ENCODE measurements at regions of chr22 and their contacts with region 1.

Region 1: DNA sequence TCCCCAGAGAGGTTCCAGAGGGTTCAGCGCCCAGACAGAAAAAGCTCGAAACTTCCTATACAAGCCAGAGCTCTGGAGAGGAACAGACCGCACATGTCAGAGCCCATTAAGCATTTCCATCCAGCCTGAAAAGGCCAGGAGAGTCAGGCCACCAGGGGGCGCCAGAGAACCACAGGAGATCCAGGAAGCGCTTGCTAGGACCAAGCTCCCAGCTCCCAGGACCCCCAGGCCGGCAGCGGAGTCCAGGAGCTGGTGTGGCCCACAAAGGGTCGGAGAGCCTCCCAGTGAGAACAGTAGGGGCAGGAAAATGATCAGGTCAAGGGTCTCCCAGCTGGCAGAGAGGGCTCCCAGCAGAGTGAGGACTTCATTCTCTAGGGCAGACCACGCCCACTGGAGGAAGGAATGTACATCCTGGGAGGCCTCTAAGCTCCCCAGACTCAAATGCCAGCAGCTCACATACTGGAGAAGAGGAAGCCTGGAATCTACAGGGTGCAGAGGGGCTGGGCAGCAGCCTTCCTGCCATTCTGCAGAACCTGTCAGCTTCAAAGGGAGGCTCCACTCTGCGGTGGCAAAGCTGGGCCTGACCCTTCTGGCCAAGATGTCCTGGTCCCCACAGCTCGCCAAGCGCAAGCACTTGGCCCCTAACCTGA is 2.1 kb upstream of the MEI1 start:
- DNase-seq: peak; percentile 97
- ATAC-seq: peak; percentile 80
- H3K4me3 Mint-ChIP-seq: no peak overlapping the region
- H3K27ac Mint-ChIP-seq: peak overlapping the region; percentile 47
- H3K4me1 Mint-ChIP-seq: peaks cover 10% of the 10 kb centered on the region
- H3K27me3 Mint-ChIP-seq: no peaks in the 10 kb centered on the region
- CTCF ChIP-seq: peak; percentile 98

Region 2: DNA sequence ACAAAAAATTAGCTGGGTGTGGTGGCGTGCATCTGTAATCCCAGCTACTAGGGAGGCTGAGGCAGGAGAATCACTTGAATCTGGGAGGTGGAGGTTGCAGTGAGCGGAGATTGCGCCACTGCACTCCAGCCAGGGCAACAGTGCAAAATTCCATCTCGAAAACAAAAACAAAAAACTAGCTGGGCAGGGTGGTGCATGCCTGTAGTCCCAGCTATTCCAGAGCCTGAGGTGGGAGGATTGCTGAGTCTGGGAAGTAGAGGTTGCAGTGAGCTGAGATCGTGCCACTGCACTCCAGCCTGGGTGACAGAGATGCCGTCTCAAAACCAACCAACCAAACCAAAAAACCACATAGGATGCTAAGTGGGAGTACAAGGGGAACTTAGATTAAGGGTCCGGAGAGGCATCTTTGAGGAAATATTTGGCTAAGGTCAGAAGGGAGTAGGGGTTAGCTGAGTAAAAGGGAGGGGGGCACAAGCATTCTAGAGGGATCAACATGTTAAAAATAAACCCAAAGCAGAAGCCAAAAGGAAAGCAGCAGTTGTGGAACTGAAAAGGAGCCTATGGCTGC is 239.0 kb before region 1 on chr22:
- CTCF ChIA-PET with region 1: no interaction called
- POLR2A ChIA-PET with region 1: no interaction called
- intact Hi-C with region 1: no loop called
- DNase-seq: no peak
- ATAC-seq: no peak
- H3K4me3 Mint-ChIP-seq: no peak overlapping the region
- H3K27ac Mint-ChIP-seq: peak overlapping the region; percentile 54
- H3K4me1 Mint-ChIP-seq: peaks cover 6% of the 10 kb centered on the region
- H3K27me3 Mint-ChIP-seq: no peaks in the 10 kb centered on the region
- CTCF ChIP-seq: no peak

Region 3: DNA sequence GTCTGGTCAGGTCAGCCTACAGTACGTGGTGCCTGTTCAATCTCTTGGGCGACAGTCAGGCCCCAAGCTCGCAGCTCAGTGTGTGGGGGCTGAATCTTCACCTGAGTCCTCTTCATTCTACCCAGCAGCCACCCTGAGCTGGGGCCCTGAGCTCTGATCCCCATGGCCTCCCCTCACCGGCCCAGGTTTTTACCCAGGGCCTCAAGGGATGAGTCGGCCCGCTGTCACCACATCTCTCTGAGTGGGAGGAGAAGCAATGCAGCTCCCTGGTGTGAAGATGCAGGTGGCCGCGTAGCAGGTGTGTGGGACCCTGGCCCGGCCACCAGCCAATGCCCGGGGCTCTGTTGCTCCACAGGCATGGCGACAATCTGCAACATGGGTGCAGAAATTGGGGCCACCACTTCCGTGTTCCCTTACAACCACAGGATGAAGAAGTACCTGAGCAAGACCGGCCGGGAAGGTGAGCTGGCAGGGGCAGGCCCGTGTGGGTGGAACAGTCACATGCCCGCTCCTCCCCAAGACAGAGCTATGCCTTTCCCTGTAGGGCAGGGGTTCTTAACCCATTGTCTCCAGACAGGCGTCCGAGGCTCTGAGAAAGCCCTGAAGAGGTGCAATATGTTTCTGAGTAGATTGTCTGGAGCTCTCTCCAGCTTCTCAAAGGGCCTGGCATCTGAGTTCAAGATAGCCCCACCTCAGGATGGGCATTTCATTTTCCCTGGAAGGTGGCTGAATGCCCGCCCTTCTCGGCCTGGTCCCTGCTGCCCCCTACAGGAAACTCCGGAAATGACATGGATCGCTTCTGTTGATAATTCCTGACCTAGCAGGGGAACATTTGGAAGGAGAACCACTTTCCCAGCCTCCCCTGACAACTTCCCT is 179.8 kb before region 1 on chr22:
- CTCF ChIA-PET with region 1: no interaction called
- POLR2A ChIA-PET with region 1: no interaction called
- intact Hi-C with region 1: no loop called
- DNase-seq: peak; percentile 55
- ATAC-seq: peak; percentile 81
- H3K4me3 Mint-ChIP-seq: no peak overlapping the region
- H3K27ac Mint-ChIP-seq: peak overlapping the region; percentile 55
- H3K4me1 Mint-ChIP-seq: peaks cover 7% of the 10 kb centered on the region
- H3K27me3 Mint-ChIP-seq: no peaks in the 10 kb centered on the region
- CTCF ChIP-seq: peak; percentile 71

Region 4: GRCh38 chr22:41576877-41577276 is 120.4 kb before region 1 on chr22:
- CTCF ChIA-PET with region 1: no interaction called
- POLR2A ChIA-PET with region 1: no interaction called
- intact Hi-C with region 1: no loop called
- DNase-seq: peak; percentile 64
- ATAC-seq: peak; percentile 75
- H3K4me3 Mint-ChIP-seq: no peak overlapping the region
- H3K27ac Mint-ChIP-seq: no peak overlapping the region
- H3K4me1 Mint-ChIP-seq: no peaks in the 10 kb centered on the region
- H3K27me3 Mint-ChIP-seq: no peaks in the 10 kb centered on the region
- CTCF ChIP-seq: peak; percentile 61

Region 5: DNA sequence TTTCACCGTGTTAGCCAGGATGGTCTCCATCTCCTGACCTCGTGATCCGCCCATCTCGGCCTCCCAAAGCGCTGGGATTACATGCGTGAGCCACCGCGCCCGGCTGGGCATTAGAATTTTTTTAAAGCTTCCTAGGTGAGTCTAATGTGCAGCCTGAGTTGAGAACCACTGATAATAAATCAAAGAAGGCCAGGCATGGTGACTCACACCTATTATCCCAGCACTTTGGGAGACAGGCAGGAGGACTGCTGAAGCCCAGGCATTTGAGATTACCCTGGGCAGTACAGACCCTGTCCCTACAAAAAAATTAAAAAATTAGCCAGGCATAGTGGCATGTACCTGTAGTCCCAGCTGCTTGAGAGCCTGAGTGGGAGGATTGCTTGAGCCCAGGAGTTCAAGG is 15.8 kb after region 1 on chr22:
- CTCF ChIA-PET with region 1: interaction called, 24 read pairs
- POLR2A ChIA-PET with region 1: no interaction called
- intact Hi-C with region 1: no loop called
- DNase-seq: no peak
- ATAC-seq: no peak
- H3K4me3 Mint-ChIP-seq: no peak overlapping the region
- H3K27ac Mint-ChIP-seq: no peak overlapping the region
- H3K4me1 Mint-ChIP-seq: no peaks in the 10 kb centered on the region
- H3K27me3 Mint-ChIP-seq: no peaks in the 10 kb centered on the region
- CTCF ChIP-seq: no peak

Region 6: DNA sequence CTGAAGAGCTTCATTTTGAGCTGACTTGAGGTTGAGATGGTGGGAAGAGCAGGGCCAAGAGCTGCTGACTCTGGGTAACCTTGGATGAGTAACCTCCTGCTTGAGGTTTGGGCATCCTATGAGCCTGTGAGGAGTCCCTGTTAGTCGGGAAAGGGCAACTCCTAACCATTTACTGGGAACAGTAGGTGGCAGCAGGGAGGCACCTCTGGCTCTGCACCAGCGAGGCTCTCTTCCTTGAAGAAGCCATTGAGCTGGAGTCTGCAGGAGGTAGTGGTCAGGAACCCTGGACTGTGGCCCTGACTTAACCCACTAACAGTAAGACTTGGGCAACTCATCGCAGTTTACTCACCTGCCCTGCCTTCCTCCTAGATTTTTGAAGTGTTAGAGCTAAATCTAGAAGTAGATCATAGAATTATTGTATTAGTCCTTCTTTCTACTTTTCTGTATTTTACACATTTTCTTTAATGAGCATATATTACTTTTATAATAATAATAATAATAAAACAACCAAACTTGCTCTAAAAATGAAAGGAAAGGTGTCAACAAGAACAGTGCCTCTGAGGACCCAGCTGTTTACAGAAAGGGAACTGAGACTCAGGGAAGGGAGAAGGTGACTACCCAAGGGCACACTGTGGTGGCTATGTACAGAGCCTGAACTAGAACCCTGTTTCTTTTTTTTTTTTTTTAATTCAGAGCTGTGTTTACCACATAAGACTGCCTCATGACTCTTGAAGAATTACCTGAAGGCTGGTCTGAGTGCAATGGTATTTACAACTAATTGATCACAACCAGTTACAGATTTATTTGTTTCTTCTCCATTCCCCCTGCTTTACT is 49.5 kb after region 1 on chr22:
- CTCF ChIA-PET with region 1: interaction called, 32 read pairs
- POLR2A ChIA-PET with region 1: no interaction called
- intact Hi-C with region 1: no loop called
- DNase-seq: peak; percentile 63
- ATAC-seq: peak; percentile 89
- H3K4me3 Mint-ChIP-seq: no peak overlapping the region
- H3K27ac Mint-ChIP-seq: no peak overlapping the region
- H3K4me1 Mint-ChIP-seq: peaks cover 6% of the 10 kb centered on the region
- H3K27me3 Mint-ChIP-seq: peaks cover 4% of the 10 kb centered on the region
- CTCF ChIP-seq: peak; percentile 54

Region 7: DNA sequence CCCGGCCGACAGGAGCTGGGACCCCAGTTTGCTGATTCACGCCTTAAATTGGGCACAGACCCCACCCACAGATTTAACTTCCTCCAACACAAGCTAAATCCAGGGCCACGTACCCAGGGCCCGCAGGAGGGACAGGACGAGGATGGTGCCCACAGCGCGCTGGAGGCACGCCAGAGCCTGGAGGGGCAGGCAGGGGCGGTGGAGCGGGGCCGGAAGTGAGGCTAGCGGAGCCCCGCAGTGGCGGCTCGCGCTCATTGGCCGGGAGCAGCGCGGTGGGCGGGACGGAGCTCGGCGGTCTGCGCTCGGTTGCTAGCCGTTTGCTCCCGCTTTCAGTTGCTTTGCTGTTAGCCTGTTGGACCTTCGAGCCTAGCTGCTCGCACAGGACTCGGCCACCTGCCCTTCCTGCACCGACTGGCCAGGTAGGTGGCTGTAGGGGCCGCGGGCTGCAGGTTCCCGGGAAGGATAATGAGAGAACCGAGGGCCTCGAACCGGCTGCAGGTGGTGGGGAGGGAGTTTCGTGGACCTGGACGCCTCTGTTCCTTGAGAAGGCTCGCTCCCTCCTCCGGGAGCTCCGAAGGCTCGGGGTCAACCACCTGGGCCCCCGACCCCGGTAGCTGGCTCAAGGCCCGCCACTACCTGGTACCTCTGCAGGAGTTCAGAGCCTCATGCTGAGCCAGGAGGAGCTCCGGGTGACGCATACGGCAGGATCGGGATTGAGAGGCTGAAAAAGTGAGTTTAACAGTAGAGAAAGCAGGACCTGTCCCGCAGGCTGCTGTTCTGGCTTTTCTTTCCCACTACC is 103.3 kb after region 1 on chr22 and contains the start of gene CCDC134:
- CTCF ChIA-PET with region 1: interaction called, 41 read pairs
- POLR2A ChIA-PET with region 1: interaction called, 3 read pairs
- intact Hi-C with region 1: no loop called
- DNase-seq: peak; percentile 93
- ATAC-seq: peak; percentile 98
- H3K4me3 Mint-ChIP-seq: peak within 1 kb of the TSS; percentile 89
- H3K27ac Mint-ChIP-seq: peak within 1 kb of the TSS; percentile 93
- H3K4me1 Mint-ChIP-seq: peaks cover 30% of the 10 kb centered on the region
- H3K27me3 Mint-ChIP-seq: no peaks in the 10 kb centered on the region
- CTCF ChIP-seq: no peak
- total RNA-seq, gene CCDC134: 15.2 to 15.9 TPM

Region 8: GRCh38 chr22:41888627-41889200 is 191.5 kb after region 1 on chr22:
- CTCF ChIA-PET with region 1: no interaction called
- POLR2A ChIA-PET with region 1: no interaction called
- intact Hi-C with region 1: no loop called
- DNase-seq: no peak
- ATAC-seq: no peak
- H3K4me3 Mint-ChIP-seq: no peak overlapping the region
- H3K27ac Mint-ChIP-seq: no peak overlapping the region
- H3K4me1 Mint-ChIP-seq: no peaks in the 10 kb centered on the region
- H3K27me3 Mint-ChIP-seq: no peaks in the 10 kb centered on the region
- CTCF ChIP-seq: no peak

Region 9: GRCh38 chr22:41925655-41926460 is 228.6 kb after region 1 on chr22:
- CTCF ChIA-PET with region 1: interaction called, 21 read pairs
- POLR2A ChIA-PET with region 1: interaction called, 3 read pairs
- intact Hi-C with region 1: no loop called
- DNase-seq: peak; percentile 86
- ATAC-seq: peak; percentile 89
- H3K4me3 Mint-ChIP-seq: peak overlapping the region; percentile 64
- H3K27ac Mint-ChIP-seq: no peak overlapping the region
- H3K4me1 Mint-ChIP-seq: peaks cover 27% of the 10 kb centered on the region
- H3K27me3 Mint-ChIP-seq: peaks cover 2% of the 10 kb centered on the region
- CTCF ChIP-seq: peak; percentile 83